B cell (primary cell): ENCODE measurements at regions of chr10 and their contacts with region 1.

Region 1: GRCh38 chr10:88835096-88835909 is 16.3 kb downstream of the ANKRD22 start:
- DNase-seq: peak; percentile 90
- ATAC-seq: peak; percentile 97
- H3K4me3 ChIP-seq: no peak overlapping the region
- H3K4me3 Mint-ChIP-seq: no peak overlapping the region
- H3K27ac ChIP-seq: no peak overlapping the region
- H3K27ac Mint-ChIP-seq: no peak overlapping the region
- H3K4me1 ChIP-seq: peaks cover 0 to 5% of the 10 kb centered on the region in 2 donors
- H3K4me1 Mint-ChIP-seq: peaks cover 6% of the 10 kb centered on the region
- H3K27me3 ChIP-seq: no peaks in the 10 kb centered on the region
- H3K27me3 Mint-ChIP-seq: peaks cover 3% of the 10 kb centered on the region
- CTCF ChIP-seq: peak; percentile 93

Region 2: GRCh38 chr10:88865281-88865876 is 30.1 kb after region 1 on chr10:
- CTCF ChIA-PET with region 1: interaction called, 14 read pairs
- POLR2A ChIA-PET with region 1: no interaction called
- intact Hi-C with region 1: no loop called
- DNase-seq: no peak
- ATAC-seq: no peak
- H3K4me3 ChIP-seq: no peak overlapping the region
- H3K4me3 Mint-ChIP-seq: no peak overlapping the region
- H3K27ac ChIP-seq: no peak overlapping the region
- H3K27ac Mint-ChIP-seq: no peak overlapping the region
- H3K4me1 ChIP-seq: no peaks in the 10 kb centered on the region
- H3K4me1 Mint-ChIP-seq: peaks cover 3% of the 10 kb centered on the region
- H3K27me3 ChIP-seq: no peaks in the 10 kb centered on the region
- H3K27me3 Mint-ChIP-seq: no peaks in the 10 kb centered on the region
- CTCF ChIP-seq: no peak

Region 3: GRCh38 chr10:88901206-88901983 is 66.1 kb after region 1 on chr10:
- CTCF ChIA-PET with region 1: interaction called, 46 read pairs
- POLR2A ChIA-PET with region 1: no interaction called
- intact Hi-C with region 1: loop called (anchors 1 kb)
- DNase-seq: peak; percentile 81
- ATAC-seq: peak; percentile 85
- H3K4me3 ChIP-seq: peak overlapping the region in 1 of 5 experiments; percentile 17
- H3K4me3 Mint-ChIP-seq: peak overlapping the region; percentile 74
- H3K27ac ChIP-seq: peak overlapping the region; percentile 78 to 81
- H3K27ac Mint-ChIP-seq: peak overlapping the region; percentile 98
- H3K4me1 ChIP-seq: peaks cover 38 to 64% of the 10 kb centered on the region in 2 donors
- H3K4me1 Mint-ChIP-seq: peaks cover 58% of the 10 kb centered on the region
- H3K27me3 ChIP-seq: no peaks in the 10 kb centered on the region
- H3K27me3 Mint-ChIP-seq: no peaks in the 10 kb centered on the region
- CTCF ChIP-seq: no peak

Region 4: GRCh38 chr10:88932539-88933256 is 97.4 kb after region 1 on chr10:
- CTCF ChIA-PET with region 1: interaction called, 749 read pairs
- POLR2A ChIA-PET with region 1: interaction called, 6 read pairs
- intact Hi-C with region 1: loop called (anchors 1 kb)
- DNase-seq: peak; percentile 71
- ATAC-seq: peak; percentile 78
- H3K4me3 ChIP-seq: no peak overlapping the region
- H3K4me3 Mint-ChIP-seq: no peak overlapping the region
- H3K27ac ChIP-seq: no peak overlapping the region
- H3K27ac Mint-ChIP-seq: peak overlapping the region; percentile 39
- H3K4me1 ChIP-seq: peaks cover 13 to 20% of the 10 kb centered on the region in 2 donors
- H3K4me1 Mint-ChIP-seq: peaks cover 33% of the 10 kb centered on the region
- H3K27me3 ChIP-seq: no peaks in the 10 kb centered on the region
- H3K27me3 Mint-ChIP-seq: no peaks in the 10 kb centered on the region
- CTCF ChIP-seq: peak; percentile 81

Region 5: GRCh38 chr10:89029785-89030437 is 194.6 kb after region 1 on chr10:
- CTCF ChIA-PET with region 1: interaction called, 21 read pairs
- POLR2A ChIA-PET with region 1: no interaction called
- intact Hi-C with region 1: loop called (anchors 10 kb)
- DNase-seq: peak; percentile 76
- ATAC-seq: peak; percentile 72
- H3K4me3 ChIP-seq: no peak overlapping the region
- H3K4me3 Mint-ChIP-seq: no peak overlapping the region
- H3K27ac ChIP-seq: no peak overlapping the region
- H3K27ac Mint-ChIP-seq: no peak overlapping the region
- H3K4me1 ChIP-seq: peaks cover 8% of the 10 kb centered on the region in 2 donors
- H3K4me1 Mint-ChIP-seq: peaks cover 12% of the 10 kb centered on the region
- H3K27me3 ChIP-seq: no peaks in the 10 kb centered on the region
- H3K27me3 Mint-ChIP-seq: no peaks in the 10 kb centered on the region
- CTCF ChIP-seq: peak; percentile 95

Region 6: GRCh38 chr10:89115876-89116627 is 280.7 kb after region 1 on chr10:
- CTCF ChIA-PET with region 1: no interaction called
- POLR2A ChIA-PET with region 1: no interaction called
- intact Hi-C with region 1: no loop called
- DNase-seq: no peak
- ATAC-seq: no peak
- H3K4me3 ChIP-seq: no peak overlapping the region
- H3K4me3 Mint-ChIP-seq: no peak overlapping the region
- H3K27ac ChIP-seq: no peak overlapping the region
- H3K27ac Mint-ChIP-seq: no peak overlapping the region
- H3K4me1 ChIP-seq: no peaks in the 10 kb centered on the region
- H3K4me1 Mint-ChIP-seq: no peaks in the 10 kb centered on the region
- H3K27me3 ChIP-seq: no peaks in the 10 kb centered on the region
- H3K27me3 Mint-ChIP-seq: peaks cover 28% of the 10 kb centered on the region
- CTCF ChIP-seq: no peak

Region 7: DNA sequence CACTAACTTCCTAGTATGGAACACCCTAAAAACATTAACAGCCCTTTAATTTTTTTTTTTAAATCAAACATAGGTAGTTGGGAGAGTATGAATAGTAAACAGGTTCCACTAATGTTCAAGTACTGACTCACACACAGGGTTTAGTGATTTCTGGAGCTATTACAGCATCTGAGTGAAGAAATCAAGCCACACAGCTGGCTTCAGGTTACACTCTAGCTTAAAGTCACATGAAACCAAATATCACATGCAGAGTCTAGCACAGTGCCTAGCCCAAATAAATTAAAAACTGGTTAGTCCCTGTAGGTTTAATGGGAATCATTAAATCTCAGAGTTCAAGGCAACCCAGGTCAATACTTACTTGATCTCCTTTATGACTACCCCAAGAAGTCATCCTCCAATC is 798.2 kb after region 1 on chr10:
- CTCF ChIA-PET with region 1: no interaction called
- POLR2A ChIA-PET with region 1: no interaction called
- intact Hi-C with region 1: no loop called
- DNase-seq: no peak
- ATAC-seq: no peak
- H3K4me3 ChIP-seq: no peak overlapping the region
- H3K4me3 Mint-ChIP-seq: no peak overlapping the region
- H3K27ac ChIP-seq: no peak overlapping the region
- H3K27ac Mint-ChIP-seq: no peak overlapping the region
- H3K4me1 ChIP-seq: no peaks in the 10 kb centered on the region
- H3K4me1 Mint-ChIP-seq: no peaks in the 10 kb centered on the region
- H3K27me3 ChIP-seq: no peaks in the 10 kb centered on the region
- H3K27me3 Mint-ChIP-seq: no peaks in the 10 kb centered on the region
- CTCF ChIP-seq: no peak